AG04449 (cell line): ENCODE measurements at regions of chr19 and their contacts with region 1.

Region 1: GRCh38 chr19:34712395-34713261 is 21.4 kb upstream of the ZNF181 start:
- DNase-seq: peak; percentile 52
- H3K4me3 ChIP-seq: no peak overlapping the region
- CTCF ChIP-seq: peak; percentile 47

Region 2: GRCh38 chr19:34501339-34502320 is 211.0 kb before region 1 on chr19:
- CTCF ChIA-PET with region 1: interaction called, 12 read pairs
- POLR2A ChIA-PET with region 1: no interaction called
- DNase-seq: peak; percentile 28
- H3K4me3 ChIP-seq: no peak overlapping the region
- CTCF ChIP-seq: peak; percentile 100

Region 3: GRCh38 chr19:34577531-34578107 is 135.0 kb before region 1 on chr19:
- CTCF ChIA-PET with region 1: no interaction called
- POLR2A ChIA-PET with region 1: no interaction called
- DNase-seq: no peak
- H3K4me3 ChIP-seq: no peak overlapping the region
- CTCF ChIP-seq: no peak

Region 4: DNA sequence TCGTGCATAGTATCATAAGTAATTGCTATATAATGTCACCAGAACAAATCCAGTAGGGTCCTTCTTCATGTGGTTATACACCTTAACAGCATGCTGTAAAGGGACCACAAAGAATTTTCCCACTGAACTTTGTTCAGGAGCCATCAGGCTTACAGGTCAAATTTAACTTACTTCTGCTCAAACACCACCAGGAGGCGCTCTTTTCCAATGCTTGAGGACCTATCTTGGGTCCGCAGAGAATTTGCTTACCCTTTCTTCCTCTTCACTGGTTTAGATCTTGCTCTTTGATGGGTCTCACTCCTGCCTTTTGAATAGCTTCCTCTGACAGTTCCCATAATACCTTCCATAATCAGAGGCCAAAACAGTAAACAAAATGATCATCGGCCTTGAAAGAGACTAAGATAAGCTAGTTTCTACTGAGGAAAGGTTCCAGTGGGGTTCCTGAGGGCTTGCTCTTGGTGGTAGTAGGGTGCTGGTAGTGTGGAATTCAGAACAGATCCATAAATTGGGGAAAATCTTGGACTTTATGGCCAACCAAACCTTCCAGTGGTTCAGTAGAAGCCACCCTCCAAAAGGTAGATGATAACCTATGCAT is 73.0 kb before region 1 on chr19:
- CTCF ChIA-PET with region 1: interaction called, 81 read pairs
- POLR2A ChIA-PET with region 1: no interaction called
- DNase-seq: peak; percentile 10
- H3K4me3 ChIP-seq: no peak overlapping the region
- CTCF ChIP-seq: peak; percentile 61